ENCODE measurements at regions of chr10 and their contacts with region 1.

Region 1: GRCh38 chr10:112304267-112304859 is 21.2 kb downstream of the TECTB start:
- DNase-seq: no peak
- ATAC-seq: peak in 1 of 2 donors; percentile 60
- H3K4me3 ChIP-seq: no peak overlapping the region
- H3K27ac ChIP-seq: no peak overlapping the region
- H3K4me1 ChIP-seq: no peaks in the 10 kb centered on the region
- H3K27me3 ChIP-seq: no peaks in the 10 kb centered on the region
- CTCF ChIP-seq: no peak

Region 2: DNA sequence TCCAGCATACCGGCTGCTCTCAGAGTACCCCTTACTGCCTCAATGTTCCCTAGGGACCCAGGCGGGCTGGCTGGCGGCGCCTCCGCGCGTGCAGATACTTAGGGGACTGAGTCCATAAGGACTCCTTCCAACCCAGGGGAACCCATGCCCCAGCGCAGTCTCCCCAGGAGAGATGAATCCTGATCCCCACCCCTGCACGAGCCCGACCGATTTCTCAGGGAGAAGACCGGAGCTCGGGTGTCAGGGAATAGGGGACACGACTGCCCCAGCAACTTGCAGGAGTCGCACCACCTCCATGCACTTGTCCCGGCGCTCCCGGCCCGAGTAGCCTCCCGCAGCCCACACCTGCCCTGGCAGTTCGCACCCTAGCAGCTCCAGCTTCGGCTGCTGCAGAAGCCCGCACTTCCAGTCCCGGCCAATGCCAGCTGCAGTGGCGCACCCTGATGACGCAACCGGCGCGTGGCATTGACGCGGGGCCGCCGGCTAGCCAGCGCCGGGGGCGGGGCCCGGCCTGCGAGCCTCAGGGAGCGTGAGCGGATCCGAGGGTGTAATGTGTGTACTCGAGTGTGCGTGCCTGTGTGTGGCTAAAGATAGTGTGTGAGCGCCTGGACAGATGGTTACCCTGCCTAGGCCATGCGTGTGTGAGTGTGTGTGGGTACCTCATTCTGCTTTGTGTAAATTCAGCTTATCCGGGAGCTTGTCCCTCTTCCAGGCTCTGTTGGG is 120.9 kb before region 1 on chr10 and contains the start of gene GPAM:
- intact Hi-C with region 1: loop called (anchors 5 kb)
- DNase-seq: peak; percentile 97
- ATAC-seq: peak; percentile 99 to 100
- H3K4me3 ChIP-seq: peak within 1 kb of the TSS; percentile 79
- H3K27ac ChIP-seq: peak within 1 kb of the TSS; percentile 80
- H3K4me1 ChIP-seq: peaks cover 25% of the 10 kb centered on the region
- H3K27me3 ChIP-seq: no peaks in the 10 kb centered on the region
- CTCF ChIP-seq: no peak
- total RNA-seq, gene GPAM: 27.2 TPM